Activated CD4-positive, alpha-beta T cell treated with anti-CD3 and anti-CD28 coated beads, Interleukin-2, amount 10 ng/mL, durations not matched to agents 24 days and 14 days (primary cell): ENCODE measurements at regions of chr4 and their contacts with region 1.

Region 1: DNA sequence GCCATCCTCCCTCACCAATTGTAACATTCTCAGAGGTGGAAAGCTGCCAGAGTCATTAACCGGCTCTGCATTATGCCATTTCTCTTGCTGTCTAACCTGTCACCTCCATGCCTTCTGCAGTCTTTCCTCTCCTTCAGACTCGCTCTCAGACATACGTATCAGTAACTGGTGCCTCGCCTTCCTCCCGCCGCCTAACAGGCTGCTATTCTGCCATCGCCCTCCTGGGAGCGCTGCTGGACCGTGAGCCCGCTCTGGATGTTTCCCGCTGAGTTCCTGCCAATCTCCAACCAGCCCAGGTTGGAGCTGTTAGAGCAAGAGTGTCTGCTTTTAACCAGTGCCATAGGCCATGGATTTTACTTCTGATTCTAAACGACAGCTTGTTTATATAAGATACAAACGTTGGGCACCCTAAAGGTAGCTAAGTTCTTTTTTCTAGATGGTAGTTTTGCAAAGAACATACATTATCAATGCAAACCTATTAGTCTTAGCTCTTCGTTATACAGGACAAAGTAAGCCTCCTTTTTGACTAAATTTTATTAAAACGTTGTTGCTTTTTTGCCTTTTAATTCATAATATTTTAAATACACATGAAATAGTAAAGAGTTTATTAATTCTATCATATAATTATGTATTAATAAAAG is 59.5 kb upstream of the NEIL3 start:
- DNase-seq: peak; percentile 93
- H3K4me3 Mint-ChIP-seq: peak overlapping the region; percentile 14
- H3K27ac Mint-ChIP-seq: no peak overlapping the region
- H3K4me1 Mint-ChIP-seq: peaks cover 10% of the 10 kb centered on the region
- H3K27me3 Mint-ChIP-seq: peaks cover 19% of the 10 kb centered on the region

Region 2: GRCh38 chr4:177339477-177340374 is 89.5 kb after region 1 on chr4:
- intact Hi-C with region 1: loop called (anchors 1 kb)
- DNase-seq: peak; percentile 62
- H3K4me3 Mint-ChIP-seq: no peak overlapping the region
- H3K27ac Mint-ChIP-seq: peak overlapping the region; percentile 67
- H3K4me1 Mint-ChIP-seq: peaks cover 16% of the 10 kb centered on the region
- H3K27me3 Mint-ChIP-seq: no peaks in the 10 kb centered on the region

Region 3: DNA sequence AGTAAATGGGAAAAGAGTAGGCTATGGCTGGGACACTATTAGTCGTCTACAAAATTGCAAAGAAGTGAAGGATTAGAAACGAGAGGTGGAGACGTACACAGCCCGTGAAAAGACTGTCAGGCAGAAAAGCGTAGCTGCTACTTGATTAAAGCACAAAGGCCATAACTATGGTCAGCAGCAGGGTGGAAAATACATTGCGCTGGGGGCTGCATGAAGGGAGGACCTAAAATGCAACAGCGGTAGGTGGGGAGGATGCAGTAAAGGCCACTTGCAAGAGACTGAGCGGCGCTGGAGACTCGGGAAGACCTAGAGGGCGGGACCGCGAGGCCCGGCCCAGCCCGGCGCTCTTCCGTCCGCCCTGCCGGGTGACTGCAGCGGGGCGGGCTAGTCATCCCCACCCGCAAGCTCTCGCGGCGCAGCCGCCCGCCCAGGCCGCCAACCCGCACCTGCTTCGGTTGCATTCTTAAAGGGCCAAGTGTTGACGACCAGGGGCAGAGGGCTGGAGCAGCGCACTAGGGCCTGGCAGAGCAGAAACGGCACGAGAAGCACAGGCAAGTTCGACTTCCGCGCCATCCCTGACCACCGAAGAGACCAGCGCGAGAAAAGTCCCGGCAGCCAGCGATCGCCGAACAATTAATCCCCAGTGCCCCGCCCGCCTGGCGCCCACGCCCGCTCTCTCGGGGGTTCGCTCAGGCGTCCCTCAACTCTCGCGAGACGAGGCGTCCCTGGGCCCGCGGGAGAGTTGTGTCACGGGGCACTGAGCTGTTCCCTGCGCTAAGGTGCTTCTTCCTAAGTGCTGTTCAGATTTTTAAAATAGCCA is 191.8 kb after region 1 on chr4 and contains the start of gene AGA:
- intact Hi-C with region 1: loop called (anchors 2 kb)
- DNase-seq: peak; percentile 98
- H3K4me3 Mint-ChIP-seq: peak within 1 kb of the TSS; percentile 95
- H3K27ac Mint-ChIP-seq: peak within 1 kb of the TSS; percentile 97
- H3K4me1 Mint-ChIP-seq: peaks cover 27% of the 10 kb centered on the region
- H3K27me3 Mint-ChIP-seq: no peaks in the 10 kb centered on the region
- total RNA-seq, gene AGA: 15.1 and 15.6 TPM in 2 replicates

Region 4: GRCh38 chr4:177555007-177555574 is 304.9 kb after region 1 on chr4:
- intact Hi-C with region 1: loop called (anchors 5 kb)
- DNase-seq: peak; percentile 70
- H3K4me3 Mint-ChIP-seq: no peak overlapping the region
- H3K27ac Mint-ChIP-seq: no peak overlapping the region
- H3K4me1 Mint-ChIP-seq: no peaks in the 10 kb centered on the region
- H3K27me3 Mint-ChIP-seq: no peaks in the 10 kb centered on the region